Naive thymus-derived CD4-positive, alpha-beta T cell (primary cell): ENCODE measurements at regions of chr5 and their contacts with region 1.

Region 1: GRCh38 chr5:109409844-109410388 is at the start of gene PJA2:
- DNase-seq: peak; percentile 94 to 98 (median 98)
- ATAC-seq: peak; percentile 88
- H3K4me3 ChIP-seq: peak within 1 kb of the TSS; percentile 77
- H3K4me3 Mint-ChIP-seq: peak within 1 kb of the TSS; percentile 89 to 100 (median 98)
- H3K27ac ChIP-seq: peak within 1 kb of the TSS; percentile 99
- H3K27ac Mint-ChIP-seq: peak within 1 kb of the TSS; percentile 97 to 100 (median 99)
- H3K4me1 ChIP-seq: peaks cover 8 to 19% of the 10 kb centered on the region in 2 donors
- H3K4me1 Mint-ChIP-seq: peaks cover 24 to 50% (median 42%) of the 10 kb centered on the region in 7 donors
- H3K27me3 ChIP-seq: no peaks in the 10 kb centered on the region
- H3K27me3 Mint-ChIP-seq: peaks cover 0 to 2% (median 0%) of the 10 kb centered on the region in 5 donors
- total RNA-seq, gene PJA2: 59.9 to 89.9 (median 76.2) TPM

Region 2: GRCh38 chr5:108381954-108382783 is 1027.7 kb before region 1 on chr5 and contains the start of gene FBXL17:
- CTCF ChIA-PET with region 1: no interaction called
- POLR2A ChIA-PET with region 1: interaction called, 42 read pairs
- intact Hi-C with region 1: loop called (anchors 1 kb)
- DNase-seq: peak; percentile 86 to 95 (median 92)
- ATAC-seq: peak; percentile 89
- H3K4me3 ChIP-seq: peak within 1 kb of the TSS; percentile 90
- H3K4me3 Mint-ChIP-seq: peak within 1 kb of the TSS; percentile 80 to 99 (median 91)
- H3K27ac ChIP-seq: peak within 1 kb of the TSS; percentile 88
- H3K27ac Mint-ChIP-seq: peak within 1 kb of the TSS; percentile 90 to 99 (median 97)
- H3K4me1 ChIP-seq: peaks cover 8 to 17% of the 10 kb centered on the region in 2 donors
- H3K4me1 Mint-ChIP-seq: peaks cover 19 to 52% (median 44%) of the 10 kb centered on the region in 7 donors
- H3K27me3 ChIP-seq: no peaks in the 10 kb centered on the region
- H3K27me3 Mint-ChIP-seq: no peaks in the 10 kb centered on the region
- total RNA-seq, gene FBXL17: 14.2 to 28.4 (median 21.7) TPM

Region 3: DNA sequence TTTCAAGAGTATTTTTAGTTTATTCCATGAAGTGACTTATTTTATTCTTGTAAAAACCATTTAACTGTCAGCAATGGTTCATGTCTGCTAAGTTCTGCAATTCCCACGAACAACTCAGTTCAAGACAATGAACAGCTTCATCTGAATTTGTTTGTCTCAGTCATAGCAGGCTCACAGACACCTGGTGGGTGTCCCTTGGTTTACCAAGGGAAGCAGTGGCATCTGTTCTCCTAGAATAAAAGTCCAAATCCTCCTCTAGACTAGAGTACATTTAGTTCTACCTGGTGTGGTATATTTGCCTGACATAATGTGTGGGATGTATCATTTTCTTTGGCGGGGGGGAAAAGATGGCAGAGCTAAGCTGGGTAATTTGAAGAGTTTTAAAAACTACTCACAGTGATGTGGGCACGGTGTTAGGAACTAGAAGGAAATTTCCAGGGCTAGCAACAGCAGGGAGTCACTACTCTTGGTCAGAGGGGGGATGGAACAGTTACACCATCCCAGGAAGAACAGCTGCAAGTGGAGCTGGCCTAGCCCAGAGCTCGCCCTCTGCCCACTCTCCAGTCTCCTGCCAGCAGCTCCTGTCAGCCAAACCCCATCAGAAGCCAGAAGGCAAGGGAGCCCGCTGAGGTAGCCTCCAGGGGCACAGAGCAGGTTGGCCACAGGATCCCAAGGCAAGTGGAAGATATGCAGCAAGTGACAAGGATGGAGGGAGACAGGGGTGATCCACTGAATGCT is 100.4 kb before region 1 on chr5:
- CTCF ChIA-PET with region 1: no interaction called
- POLR2A ChIA-PET with region 1: no interaction called
- intact Hi-C with region 1: no loop called
- DNase-seq: no peak
- ATAC-seq: no peak
- H3K4me3 ChIP-seq: no peak overlapping the region
- H3K4me3 Mint-ChIP-seq: no peak overlapping the region
- H3K27ac ChIP-seq: no peak overlapping the region
- H3K27ac Mint-ChIP-seq: no peak overlapping the region
- H3K4me1 ChIP-seq: no peaks in the 10 kb centered on the region
- H3K4me1 Mint-ChIP-seq: no peaks in the 10 kb centered on the region
- H3K27me3 ChIP-seq: no peaks in the 10 kb centered on the region
- H3K27me3 Mint-ChIP-seq: no peaks in the 10 kb centered on the region

Region 4: GRCh38 chr5:109329333-109330237 is 80.3 kb before region 1 on chr5:
- CTCF ChIA-PET with region 1: no interaction called
- POLR2A ChIA-PET with region 1: no interaction called
- intact Hi-C with region 1: loop called in 1 of 2 experiments (anchors 2 kb)
- DNase-seq: no peak
- ATAC-seq: no peak
- H3K4me3 ChIP-seq: no peak overlapping the region
- H3K4me3 Mint-ChIP-seq: no peak overlapping the region
- H3K27ac ChIP-seq: no peak overlapping the region
- H3K27ac Mint-ChIP-seq: peak overlapping the region in 4 of 9 donors; percentile 6 to 42 (median 20)
- H3K4me1 ChIP-seq: no peaks in the 10 kb centered on the region
- H3K4me1 Mint-ChIP-seq: peaks cover 0 to 3% (median 0%) of the 10 kb centered on the region in 7 donors
- H3K27me3 ChIP-seq: no peaks in the 10 kb centered on the region
- H3K27me3 Mint-ChIP-seq: no peaks in the 10 kb centered on the region

Region 5: DNA sequence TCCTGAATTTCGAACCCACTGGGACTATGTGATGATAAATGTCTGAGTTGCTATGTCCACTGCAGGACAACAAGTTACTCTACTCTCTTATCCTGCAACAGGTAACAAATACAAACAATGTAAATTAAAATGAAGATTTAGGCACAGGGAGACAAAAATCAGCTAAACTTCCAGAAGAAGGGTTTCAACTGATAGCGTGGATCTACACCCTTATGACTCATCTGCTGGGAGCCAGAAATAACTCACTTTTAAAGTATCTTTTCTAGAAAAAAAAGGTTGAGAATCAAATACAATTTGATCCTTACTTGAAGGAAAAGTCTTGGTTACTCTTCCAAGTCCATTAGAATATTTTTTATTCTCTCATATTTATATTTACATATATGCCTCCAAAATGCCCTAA is 21.5 kb before region 1 on chr5:
- CTCF ChIA-PET with region 1: no interaction called
- POLR2A ChIA-PET with region 1: interaction called, 12 read pairs
- intact Hi-C with region 1: loop called in 1 of 2 experiments (anchors 1 kb)
- DNase-seq: no peak
- ATAC-seq: no peak
- H3K4me3 ChIP-seq: no peak overlapping the region
- H3K4me3 Mint-ChIP-seq: peak overlapping the region in 3 of 10 donors; percentile 5 to 47 (median 17)
- H3K27ac ChIP-seq: no peak overlapping the region
- H3K27ac Mint-ChIP-seq: peak overlapping the region in 2 of 9 donors; percentile 37 to 43
- H3K4me1 ChIP-seq: peaks cover 5 to 7% of the 10 kb centered on the region in 2 donors
- H3K4me1 Mint-ChIP-seq: peaks cover 28 to 93% (median 88%) of the 10 kb centered on the region in 7 donors
- H3K27me3 ChIP-seq: no peaks in the 10 kb centered on the region
- H3K27me3 Mint-ChIP-seq: no peaks in the 10 kb centered on the region

Region 6: DNA sequence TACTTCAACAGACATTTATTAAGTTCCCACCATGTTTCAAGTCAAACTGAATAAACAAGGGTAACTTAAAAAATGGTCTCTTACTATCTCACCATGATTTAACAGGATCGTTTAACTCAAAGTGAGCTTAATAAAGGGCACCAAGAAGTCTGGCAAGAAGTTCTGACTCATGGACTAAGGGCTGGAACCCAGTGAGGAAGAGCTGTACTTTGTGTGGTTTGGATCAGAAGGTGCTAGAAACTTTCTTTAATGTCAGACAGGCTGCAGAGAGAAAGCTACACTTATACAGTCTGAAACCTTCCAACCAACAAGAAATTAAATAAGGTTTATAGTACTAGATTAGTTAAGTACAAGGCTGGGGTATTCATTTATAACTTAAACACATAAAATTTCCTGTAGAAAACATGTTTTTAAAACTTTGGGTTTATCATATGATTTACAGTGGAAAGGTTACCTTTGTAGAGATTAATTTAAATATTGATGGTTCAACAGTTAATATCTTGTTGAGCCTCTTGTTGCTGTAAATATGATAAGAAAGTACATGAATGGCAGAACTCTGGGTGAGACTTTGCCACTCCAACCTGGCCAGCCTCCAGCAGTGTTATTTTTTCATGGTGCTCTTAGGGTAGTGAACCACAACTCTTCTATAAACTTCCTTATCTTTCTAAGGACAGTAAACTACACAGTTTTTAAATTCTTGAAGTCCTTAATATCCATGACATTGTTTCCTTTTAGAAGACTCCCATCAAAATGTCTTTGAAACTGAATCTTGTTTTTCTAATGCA is 442.6 kb after region 1 on chr5:
- CTCF ChIA-PET with region 1: no interaction called
- POLR2A ChIA-PET with region 1: interaction called, 4 read pairs
- intact Hi-C with region 1: loop called in 1 of 2 experiments (anchors 10 kb)
- DNase-seq: no peak
- ATAC-seq: no peak
- H3K4me3 ChIP-seq: no peak overlapping the region
- H3K4me3 Mint-ChIP-seq: peak overlapping the region in 8 of 10 donors; percentile 9 to 75 (median 23)
- H3K27ac ChIP-seq: no peak overlapping the region
- H3K27ac Mint-ChIP-seq: peak overlapping the region in 8 of 9 donors; percentile 63 to 97 (median 84)
- H3K4me1 ChIP-seq: peaks cover 61 to 71% of the 10 kb centered on the region in 2 donors
- H3K4me1 Mint-ChIP-seq: peaks cover 47 to 99% (median 91%) of the 10 kb centered on the region in 7 donors
- H3K27me3 ChIP-seq: no peaks in the 10 kb centered on the region
- H3K27me3 Mint-ChIP-seq: no peaks in the 10 kb centered on the region

Region 7: GRCh38 chr5:110738812-110739651 is 1329.1 kb after region 1 on chr5 and contains the start of gene SLC25A46:
- CTCF ChIA-PET with region 1: no interaction called
- POLR2A ChIA-PET with region 1: no interaction called
- intact Hi-C with region 1: loop called (anchors 1 kb)
- DNase-seq: peak; percentile 75 to 92 (median 91)
- ATAC-seq: peak; percentile 92
- H3K4me3 ChIP-seq: peak within 1 kb of the TSS; percentile 96
- H3K4me3 Mint-ChIP-seq: peak within 1 kb of the TSS; percentile 90 to 100 (median 96)
- H3K27ac ChIP-seq: peak within 1 kb of the TSS; percentile 86
- H3K27ac Mint-ChIP-seq: peak within 1 kb of the TSS; percentile 91 to 100 (median 96)
- H3K4me1 ChIP-seq: peaks cover 4 to 15% of the 10 kb centered on the region in 2 donors
- H3K4me1 Mint-ChIP-seq: peaks cover 14 to 45% (median 34%) of the 10 kb centered on the region in 7 donors
- H3K27me3 ChIP-seq: no peaks in the 10 kb centered on the region
- H3K27me3 Mint-ChIP-seq: peaks cover 4 to 19% (median 6%) of the 10 kb centered on the region in 5 donors
- total RNA-seq, gene SLC25A46: 23.8 to 50.5 (median 35.9) TPM

Region 8: DNA sequence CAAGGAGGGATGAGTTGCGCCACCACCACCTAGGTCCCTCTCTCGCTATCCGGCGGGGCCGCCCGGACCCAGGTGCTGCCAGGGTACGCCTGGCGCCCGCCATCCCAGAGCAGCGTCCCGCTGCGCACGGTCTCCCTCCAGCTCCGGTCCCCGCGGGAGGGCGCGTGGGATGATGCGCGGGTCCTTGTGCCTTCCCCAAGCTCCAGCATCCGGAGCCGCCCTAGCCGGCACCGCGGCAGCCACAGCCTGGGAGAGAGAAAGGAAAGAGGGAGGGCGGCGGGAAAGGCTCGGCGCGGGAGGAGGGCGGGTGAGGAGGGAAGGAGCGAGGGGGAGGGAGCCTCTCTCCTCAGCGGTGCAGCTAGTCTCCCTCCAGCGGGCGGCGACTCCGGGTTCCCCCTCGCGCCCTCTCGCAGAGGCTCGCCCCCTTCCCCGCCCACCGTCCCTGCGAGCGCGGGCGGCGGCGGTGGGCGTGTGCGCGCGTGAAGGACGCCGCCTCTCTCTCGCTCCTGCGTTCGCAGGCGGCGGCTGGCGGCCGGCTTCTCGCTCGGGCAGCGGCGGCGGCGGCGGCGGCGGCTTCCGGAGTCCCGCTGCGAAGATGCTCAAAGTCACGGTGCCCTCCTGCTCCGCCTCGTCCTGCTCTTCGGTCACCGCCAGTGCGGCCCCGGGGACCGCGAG is 1814.1 kb after region 1 on chr5 and contains the start of gene CAMK4:
- CTCF ChIA-PET with region 1: no interaction called
- POLR2A ChIA-PET with region 1: no interaction called
- intact Hi-C with region 1: loop called in 1 of 2 experiments (anchors 10 kb)
- DNase-seq: peak; percentile 74 to 87 (median 84)
- ATAC-seq: peak; percentile 95
- H3K4me3 ChIP-seq: peak within 1 kb of the TSS; percentile 81
- H3K4me3 Mint-ChIP-seq: peak within 1 kb of the TSS; percentile 79 to 99 (median 96)
- H3K27ac ChIP-seq: peak within 1 kb of the TSS; percentile 93
- H3K27ac Mint-ChIP-seq: peak within 1 kb of the TSS; percentile 89 to 99 (median 97)
- H3K4me1 ChIP-seq: peaks cover 17 to 25% of the 10 kb centered on the region in 2 donors
- H3K4me1 Mint-ChIP-seq: peaks cover 15 to 39% (median 26%) of the 10 kb centered on the region in 7 donors
- H3K27me3 ChIP-seq: no peaks in the 10 kb centered on the region
- H3K27me3 Mint-ChIP-seq: peaks cover 0 to 4% (median 0%) of the 10 kb centered on the region in 5 donors
- total RNA-seq, gene CAMK4: 118 to 366 (median 210) TPM